RWPE1 (cell line): ENCODE measurements at regions of chr5 and their contacts with region 1.

Region 1: DNA sequence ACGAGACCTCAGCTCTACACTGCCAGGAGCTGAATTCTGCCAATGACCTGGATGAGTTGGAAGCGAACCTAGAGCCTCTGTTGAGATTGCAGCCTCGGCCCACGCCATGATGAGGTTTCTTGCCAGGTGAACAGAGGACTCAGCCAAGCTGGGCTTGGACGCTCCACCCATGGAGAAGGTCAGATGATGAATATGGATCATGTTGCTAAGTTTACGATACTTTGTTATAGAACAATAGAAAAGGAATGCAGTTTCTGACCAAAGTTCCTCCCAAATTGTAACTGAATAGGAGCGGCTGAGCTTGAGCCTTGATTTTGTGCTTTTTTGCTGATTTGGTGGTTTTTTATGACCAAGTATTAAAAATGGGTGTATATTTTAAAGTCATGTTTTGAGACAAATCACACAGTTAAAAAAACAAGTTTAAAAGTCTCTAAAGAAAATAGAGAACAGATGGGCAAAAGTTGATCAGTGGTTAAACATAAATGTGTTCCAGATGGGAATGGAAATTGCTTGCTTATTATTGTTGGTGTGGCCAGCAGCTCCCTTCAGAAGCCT is 32.9 kb downstream of the ROPN1L start:
- DNase-seq: no peak
- H3K27ac ChIP-seq: no peak overlapping the region
- CTCF ChIP-seq: no peak

Region 2: GRCh38 chr5:10563945-10564837 is 89.6 kb after region 1 on chr5 and contains the start of gene ANKRD33B:
- CTCF ChIA-PET with region 1: no interaction called
- POLR2A ChIA-PET with region 1: no interaction called
- DNase-seq: peak; percentile 63
- H3K27ac ChIP-seq: peak within 1 kb of the TSS; percentile 81
- CTCF ChIP-seq: no peak

Region 3: DNA sequence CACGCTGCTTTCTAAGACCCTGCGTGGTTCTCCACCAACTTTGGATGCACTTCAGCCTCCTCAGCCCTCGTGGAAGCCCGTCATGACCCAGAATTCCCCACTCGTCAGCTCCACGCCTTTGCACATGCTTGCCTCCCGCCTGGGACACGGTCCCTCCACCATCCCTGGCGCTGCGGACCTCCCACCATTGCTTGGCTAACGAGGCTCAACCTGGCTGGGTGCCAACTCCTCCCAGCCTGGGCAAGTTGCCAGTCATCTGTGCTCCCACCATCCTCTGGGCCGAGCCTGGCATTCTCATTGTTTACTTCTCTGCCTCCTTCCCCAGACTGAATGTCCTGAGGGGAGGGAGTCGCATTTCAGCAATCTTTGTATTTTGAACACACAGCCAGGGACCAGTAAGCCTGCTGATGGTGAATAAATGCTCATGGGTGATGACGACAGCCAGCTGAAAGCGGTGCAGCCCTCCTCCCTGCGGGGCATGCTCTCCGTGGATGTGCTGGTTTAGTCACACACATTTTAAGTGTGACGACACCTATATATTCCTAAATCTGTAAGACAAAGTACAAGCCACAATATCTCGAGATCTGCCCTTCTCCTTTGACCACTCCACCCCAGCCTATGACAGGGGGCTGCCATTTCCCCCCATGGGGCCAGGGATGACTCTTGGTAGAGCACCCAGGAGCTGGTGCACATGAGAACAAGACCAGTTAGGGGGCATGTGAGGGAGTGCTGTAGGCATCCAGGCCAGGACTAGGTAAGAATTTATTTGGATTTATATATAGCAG is 126.8 kb after region 1 on chr5:
- CTCF ChIA-PET with region 1: no interaction called
- POLR2A ChIA-PET with region 1: interaction called, 15 read pairs
- DNase-seq: peak; percentile 93
- H3K27ac ChIP-seq: peak overlapping the region; percentile 95
- CTCF ChIP-seq: no peak

Region 4: DNA sequence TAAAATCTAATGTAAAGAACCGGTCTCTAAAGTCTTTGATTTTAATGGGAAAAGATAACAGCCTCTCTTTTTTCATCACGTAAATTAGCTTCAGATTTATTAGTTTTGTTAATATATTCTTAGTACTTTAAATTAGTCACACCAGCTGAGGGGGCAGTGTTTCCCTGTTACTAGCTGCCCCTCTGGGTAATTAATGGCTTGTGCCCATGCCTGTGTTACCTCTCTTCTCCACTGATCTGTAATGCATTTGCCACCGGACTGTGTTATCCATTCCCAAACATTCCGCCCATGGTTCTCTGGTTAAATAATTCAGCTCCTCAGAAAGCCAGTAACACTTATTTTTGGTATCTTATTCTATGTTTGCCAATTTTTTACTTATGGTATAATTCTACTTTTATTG is 1163.4 kb after region 1 on chr5:
- CTCF ChIA-PET with region 1: no interaction called
- POLR2A ChIA-PET with region 1: no interaction called
- DNase-seq: no peak
- H3K27ac ChIP-seq: no peak overlapping the region
- CTCF ChIP-seq: no peak